GM12878 (cell line): ENCODE measurements at regions of chr17 and their contacts with region 1.

Region 1: GRCh38 chr17:35889818-35890763 is 9.9 kb upstream of the CCL5 start:
- DNase-seq: no peak
- ATAC-seq: peak; percentile 9; the same call in 2 of the 3 replicates
- H3K4me3 ChIP-seq: no peak overlapping the region
- H3K27ac ChIP-seq: no peak overlapping the region
- H3K4me1 ChIP-seq: peaks cover 28% of the 10 kb centered on the region
- H3K27me3 ChIP-seq: no peaks in the 10 kb centered on the region
- CTCF ChIP-seq: no peak
- EP300 ChIP-seq: no peak
- POLR2A ChIP-seq: no peak
- RAD21 ChIP-seq: no peak

Region 2: GRCh38 chr17:35900708-35901480 is 10.8 kb after region 1 on chr17:
- CTCF ChIA-PET with region 1: interaction called, 4 read pairs
- POLR2A ChIA-PET with region 1: interaction called, 8 read pairs
- RAD21 ChIA-PET with region 1: interaction called, 17 read pairs
- SMC1A ChIA-PET with region 1: interaction called, 8 read pairs
- in situ Hi-C with region 1: no loop called
- intact Hi-C with region 1: no loop called
- DNase-seq: no peak
- ATAC-seq: no peak; the same call in 2 of the 3 replicates
- H3K4me3 ChIP-seq: no peak overlapping the region
- H3K27ac ChIP-seq: no peak overlapping the region
- H3K4me1 ChIP-seq: peaks cover 5% of the 10 kb centered on the region
- H3K27me3 ChIP-seq: no peaks in the 10 kb centered on the region
- CTCF ChIP-seq: no peak
- EP300 ChIP-seq: no peak
- POLR2A ChIP-seq: no peak
- RAD21 ChIP-seq: no peak

Region 3: DNA sequence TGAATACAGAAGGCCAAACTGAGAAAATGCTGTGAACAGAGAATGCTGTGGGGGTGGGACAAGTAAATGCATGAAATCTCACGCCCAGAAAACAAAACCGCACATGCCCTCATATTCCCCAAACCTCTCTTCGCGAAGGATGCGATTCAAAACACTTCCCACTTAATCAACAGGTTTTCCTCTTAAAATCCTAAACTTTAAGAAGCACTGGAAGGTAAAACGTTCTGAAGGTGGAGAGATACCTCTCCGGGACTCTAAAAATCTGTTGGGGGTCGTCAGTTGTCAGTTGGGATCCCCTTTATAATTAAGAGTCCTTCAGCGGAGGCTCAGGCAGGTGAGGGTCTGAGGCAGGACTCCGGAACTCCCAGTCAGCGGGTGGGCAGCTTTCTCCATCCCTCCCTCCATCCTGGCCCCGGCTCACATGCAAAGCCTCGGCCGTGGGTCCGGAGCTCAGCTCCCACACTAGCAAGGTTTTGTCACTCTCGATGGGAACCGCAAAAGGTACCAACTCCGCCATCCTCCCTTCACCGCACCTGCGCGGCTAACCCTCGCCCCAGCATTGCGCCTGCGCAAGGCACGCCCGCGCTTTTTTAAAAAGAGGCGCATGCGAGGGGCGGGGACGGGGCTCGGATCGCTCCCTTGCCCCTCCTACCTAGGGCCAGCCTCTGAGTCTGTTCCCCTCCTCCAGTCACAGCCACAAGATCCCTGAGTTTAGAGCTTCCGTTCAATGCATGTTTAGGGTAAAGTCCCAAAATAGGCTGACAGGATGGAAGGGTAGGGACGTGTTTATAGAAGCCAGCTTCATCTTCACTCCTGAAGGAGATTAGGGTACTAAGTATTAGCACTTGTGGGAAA is 40.3 kb after region 1 on chr17 and contains the start of gene RDM1:
- CTCF ChIA-PET with region 1: interaction called, 3 read pairs
- POLR2A ChIA-PET with region 1: interaction called, 3 read pairs
- RAD21 ChIA-PET with region 1: interaction called, 3 read pairs
- SMC1A ChIA-PET with region 1: interaction called, 20 read pairs
- in situ Hi-C with region 1: no loop called
- intact Hi-C with region 1: no loop called
- DNase-seq: peak; percentile 53
- ATAC-seq: peak; percentile 98
- H3K4me3 ChIP-seq: peak within 1 kb of the TSS; percentile 62
- H3K27ac ChIP-seq: peak within 1 kb of the TSS; percentile 51
- H3K4me1 ChIP-seq: peaks cover 5% of the 10 kb centered on the region; the same call in 1 of the 2 replicates
- H3K27me3 ChIP-seq: no peaks in the 10 kb centered on the region
- CTCF ChIP-seq: no peak
- EP300 ChIP-seq: peak in 1 of 2 experiments; percentile 3; a peak in 1 of 4 replicates
- POLR2A ChIP-seq: peak; percentile 77
- RAD21 ChIP-seq: no peak
- polyA plus RNA-seq, gene RDM1: 12.0 to 15.9 TPM